CD8-positive, alpha-beta T cell (primary cell): ENCODE measurements at regions of chr12 and their contacts with region 1.

Region 1: DNA sequence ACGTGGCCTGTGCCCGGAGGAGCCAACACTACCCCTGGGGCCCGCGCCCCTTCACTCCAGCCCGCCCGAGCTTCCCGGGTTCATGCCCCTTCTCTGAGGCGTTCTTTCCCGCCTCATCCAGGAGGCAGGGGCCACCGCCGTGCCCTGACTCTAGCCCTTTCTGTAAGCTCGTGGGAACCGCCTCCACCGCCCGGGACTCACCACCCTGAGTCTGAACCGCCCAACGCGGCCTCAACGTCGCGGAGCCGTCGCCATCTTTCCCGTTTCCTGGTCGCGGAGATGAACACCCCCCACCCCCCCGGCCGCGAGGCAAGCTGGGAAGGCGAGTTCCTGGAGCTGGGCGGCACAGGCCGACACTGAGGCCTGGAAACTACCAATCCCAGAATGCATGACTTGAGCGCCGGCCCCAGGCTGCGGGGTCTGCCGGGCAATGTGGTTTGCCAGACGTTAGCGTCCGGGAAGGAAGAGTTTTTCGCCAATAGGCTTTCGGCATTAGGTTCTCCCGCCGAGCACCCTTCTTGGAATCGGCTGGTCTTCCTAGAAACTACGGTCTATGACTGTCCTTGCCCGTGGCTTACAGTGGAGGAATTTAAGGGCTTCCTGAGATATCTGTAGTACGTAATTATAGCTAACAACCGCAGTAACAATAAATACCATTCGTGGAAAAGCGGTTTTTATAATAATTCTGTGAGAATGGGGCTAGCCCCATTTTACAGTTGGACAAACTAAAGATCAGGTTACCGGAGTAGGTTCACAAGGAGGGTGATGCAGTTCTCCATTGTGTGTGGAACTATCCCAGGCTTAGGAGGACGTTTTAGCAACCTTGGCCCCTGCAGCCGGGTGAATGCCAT is at the start of gene DDX23:
- DNase-seq: peak; percentile 79 to 97 (median 90)
- ATAC-seq: peak; percentile 90
- H3K4me3 ChIP-seq: peak within 1 kb of the TSS; percentile 67 to 91
- H3K4me3 Mint-ChIP-seq: peak within 1 kb of the TSS; percentile 99
- H3K27ac ChIP-seq: peak within 1 kb of the TSS; percentile 92 to 96
- H3K27ac Mint-ChIP-seq: peak within 1 kb of the TSS; percentile 99
- H3K4me1 ChIP-seq: peaks cover 28% of the 10 kb centered on the region
- H3K4me1 Mint-ChIP-seq: peaks cover 42% of the 10 kb centered on the region
- H3K27me3 ChIP-seq: no peaks in the 10 kb centered on the region
- H3K27me3 Mint-ChIP-seq: no peaks in the 10 kb centered on the region
- CTCF ChIP-seq: no peak
- total RNA-seq, gene DDX23: 70.6 to 76.4 TPM

Region 2: DNA sequence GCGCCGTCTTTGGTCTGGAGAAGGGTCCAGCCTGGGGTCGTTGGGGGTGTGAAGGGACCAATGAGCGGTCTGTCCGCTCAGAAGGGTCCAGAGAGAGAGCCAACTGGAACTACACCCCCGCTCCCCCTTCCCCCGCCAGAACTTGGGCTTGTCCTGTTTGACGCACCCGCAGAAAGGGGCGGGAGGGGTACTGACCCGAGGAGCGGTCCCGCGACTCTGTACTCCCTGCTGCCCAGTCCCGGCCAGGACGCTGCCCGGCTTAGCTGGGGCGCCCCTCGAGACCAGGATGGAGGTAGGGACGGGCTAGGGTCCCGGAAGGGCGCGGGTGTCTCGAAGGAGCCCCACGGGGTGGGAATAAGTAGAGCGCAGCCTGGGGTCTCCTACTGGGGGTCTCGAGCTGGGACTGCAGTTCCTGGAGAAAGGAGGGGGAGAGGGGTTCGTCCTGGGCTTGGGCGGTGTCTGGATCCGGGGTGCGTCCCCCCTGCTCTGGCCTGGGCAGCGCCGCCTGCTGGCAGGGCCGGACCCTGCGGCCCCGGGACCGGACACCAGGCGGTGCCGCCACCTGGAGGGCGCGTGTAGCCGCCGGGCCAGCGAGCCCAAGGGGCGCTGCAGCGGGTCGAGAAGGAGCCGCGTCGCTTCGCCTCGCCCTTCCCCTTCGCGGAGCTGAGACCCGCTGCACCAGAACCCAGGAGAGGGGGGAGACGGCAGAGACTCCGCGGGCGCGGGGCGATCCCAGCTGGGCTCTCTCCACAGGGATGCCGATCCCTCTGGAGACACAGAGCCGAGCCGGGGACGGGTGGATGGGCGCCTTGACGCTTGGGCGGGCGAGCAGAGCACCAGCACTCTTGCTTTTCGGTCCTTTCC is 37.6 kb before region 1 on chr12:
- CTCF ChIA-PET with region 1: interaction called, 8 read pairs
- POLR2A ChIA-PET with region 1: interaction called, 4 read pairs
- intact Hi-C with region 1: loop called in 1 of 2 experiments (anchors 2 kb)
- DNase-seq: peak; percentile 39 to 86 (median 70)
- ATAC-seq: peak; percentile 56
- H3K4me3 ChIP-seq: peak overlapping the region; percentile 73 to 88
- H3K4me3 Mint-ChIP-seq: peak overlapping the region; percentile 88
- H3K27ac ChIP-seq: peak overlapping the region in 1 of 2 experiments; percentile 40
- H3K27ac Mint-ChIP-seq: no peak overlapping the region
- H3K4me1 ChIP-seq: peaks cover 27% of the 10 kb centered on the region
- H3K4me1 Mint-ChIP-seq: peaks cover 36% of the 10 kb centered on the region
- H3K27me3 ChIP-seq: no peaks in the 10 kb centered on the region
- H3K27me3 Mint-ChIP-seq: peaks cover 8% of the 10 kb centered on the region
- CTCF ChIP-seq: peak; percentile 83

Region 3: DNA sequence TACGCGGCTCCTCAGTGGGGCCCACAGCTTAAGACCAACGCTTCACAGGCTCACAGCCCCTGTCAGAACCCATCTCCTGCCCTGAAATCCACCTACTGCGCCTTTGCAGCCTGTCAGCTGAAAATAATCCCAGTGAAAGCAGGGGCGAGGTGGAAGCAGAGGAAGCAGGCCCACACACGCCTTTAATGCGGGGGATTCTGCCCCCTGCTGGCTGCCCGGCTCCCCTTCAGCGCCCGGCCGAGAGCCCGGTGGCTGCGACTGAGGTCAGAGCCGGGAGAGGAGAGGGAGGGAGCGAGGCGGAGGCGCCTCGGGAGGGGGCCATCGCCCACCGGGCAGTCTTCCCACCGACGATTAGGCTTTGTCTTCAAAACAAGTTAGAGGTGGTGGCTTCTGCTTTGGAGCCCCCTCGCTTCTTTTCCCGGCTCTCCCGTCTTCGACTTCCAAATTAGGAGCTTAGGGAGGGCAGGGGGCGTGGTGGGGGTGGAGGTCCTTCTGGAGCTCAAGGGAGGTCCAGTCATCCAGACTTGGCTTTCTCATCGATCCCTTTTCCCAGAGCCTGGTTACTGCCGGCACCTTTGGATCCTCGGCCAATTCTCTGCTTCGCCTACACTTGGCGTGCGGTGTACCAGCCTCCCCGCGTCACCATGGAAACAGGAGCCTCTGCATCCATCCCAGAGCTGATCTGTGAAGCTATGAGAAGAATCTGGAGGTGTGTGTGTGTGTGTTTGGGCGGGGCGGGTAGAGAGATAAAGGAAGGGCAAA is 38.7 kb after region 1 on chr12:
- CTCF ChIA-PET with region 1: interaction called, 270 read pairs
- POLR2A ChIA-PET with region 1: interaction called, 41 read pairs
- intact Hi-C with region 1: loop called in 1 of 2 experiments (anchors 1 kb)
- DNase-seq: peak; percentile 55 to 85 (median 73)
- ATAC-seq: peak; percentile 99
- H3K4me3 ChIP-seq: peak overlapping the region in 1 of 2 experiments; percentile 35
- H3K4me3 Mint-ChIP-seq: no peak overlapping the region
- H3K27ac ChIP-seq: no peak overlapping the region
- H3K27ac Mint-ChIP-seq: no peak overlapping the region
- H3K4me1 ChIP-seq: peaks cover 7% of the 10 kb centered on the region
- H3K4me1 Mint-ChIP-seq: peaks cover 3% of the 10 kb centered on the region
- H3K27me3 ChIP-seq: peaks cover 5 to 13% of the 10 kb centered on the region in 2 experiments
- H3K27me3 Mint-ChIP-seq: peaks cover 19% of the 10 kb centered on the region
- CTCF ChIP-seq: peak; percentile 83

Region 4: GRCh38 chr12:48936379-48936979 is 84.4 kb after region 1 on chr12:
- CTCF ChIA-PET with region 1: interaction called, 115 read pairs
- POLR2A ChIA-PET with region 1: interaction called, 9 read pairs
- intact Hi-C with region 1: loop called (anchors 1 kb)
- DNase-seq: peak; percentile 72 to 94 (median 86)
- ATAC-seq: peak; percentile 67
- H3K4me3 ChIP-seq: no peak overlapping the region
- H3K4me3 Mint-ChIP-seq: no peak overlapping the region
- H3K27ac ChIP-seq: peak overlapping the region in 1 of 2 experiments; percentile 17
- H3K27ac Mint-ChIP-seq: peak overlapping the region; percentile 79
- H3K4me1 ChIP-seq: peaks cover 20% of the 10 kb centered on the region
- H3K4me1 Mint-ChIP-seq: peaks cover 30% of the 10 kb centered on the region
- H3K27me3 ChIP-seq: no peaks in the 10 kb centered on the region
- H3K27me3 Mint-ChIP-seq: no peaks in the 10 kb centered on the region
- CTCF ChIP-seq: peak; percentile 88

Region 5: DNA sequence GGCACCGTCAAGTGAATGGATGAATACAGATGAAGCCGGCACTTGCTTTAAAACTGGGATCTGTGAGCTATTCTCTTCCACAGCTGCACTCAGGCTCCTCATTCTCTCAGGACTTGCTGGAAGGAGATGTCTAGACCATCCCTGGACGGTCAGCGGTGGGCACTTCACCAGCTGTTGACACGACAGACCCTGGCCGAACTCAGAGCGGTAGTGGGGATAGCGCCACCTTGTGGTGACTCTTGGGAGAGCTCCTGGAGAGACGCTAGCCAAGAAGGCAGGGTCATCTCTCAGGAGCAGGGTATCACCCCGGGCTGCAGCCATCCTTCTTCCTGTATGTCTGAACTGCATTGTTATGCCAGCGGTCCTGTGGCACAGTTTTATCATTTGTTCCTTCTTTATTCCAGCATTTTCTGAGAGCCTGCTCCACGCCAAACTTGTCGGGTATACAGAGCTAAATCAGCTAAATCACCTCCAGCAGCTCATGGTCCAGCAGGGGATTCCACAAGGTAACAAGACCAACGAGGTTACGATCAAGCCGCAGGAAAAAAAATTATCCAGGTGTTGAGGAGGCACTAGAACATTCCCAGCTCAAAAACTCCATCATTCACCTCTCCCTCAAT is 136.0 kb after region 1 on chr12:
- CTCF ChIA-PET with region 1: interaction called, 23 read pairs
- POLR2A ChIA-PET with region 1: interaction called, 3 read pairs
- intact Hi-C with region 1: no loop called
- DNase-seq: peak in 8 of 9 experiments; percentile 58 to 84 (median 78)
- ATAC-seq: peak; percentile 84
- H3K4me3 ChIP-seq: no peak overlapping the region
- H3K4me3 Mint-ChIP-seq: no peak overlapping the region
- H3K27ac ChIP-seq: no peak overlapping the region
- H3K27ac Mint-ChIP-seq: no peak overlapping the region
- H3K4me1 ChIP-seq: no peaks in the 10 kb centered on the region
- H3K4me1 Mint-ChIP-seq: peaks cover 5% of the 10 kb centered on the region
- H3K27me3 ChIP-seq: peaks cover 0 to 7% of the 10 kb centered on the region in 2 experiments
- H3K27me3 Mint-ChIP-seq: peaks cover 24% of the 10 kb centered on the region
- CTCF ChIP-seq: peak; percentile 81

Region 6: DNA sequence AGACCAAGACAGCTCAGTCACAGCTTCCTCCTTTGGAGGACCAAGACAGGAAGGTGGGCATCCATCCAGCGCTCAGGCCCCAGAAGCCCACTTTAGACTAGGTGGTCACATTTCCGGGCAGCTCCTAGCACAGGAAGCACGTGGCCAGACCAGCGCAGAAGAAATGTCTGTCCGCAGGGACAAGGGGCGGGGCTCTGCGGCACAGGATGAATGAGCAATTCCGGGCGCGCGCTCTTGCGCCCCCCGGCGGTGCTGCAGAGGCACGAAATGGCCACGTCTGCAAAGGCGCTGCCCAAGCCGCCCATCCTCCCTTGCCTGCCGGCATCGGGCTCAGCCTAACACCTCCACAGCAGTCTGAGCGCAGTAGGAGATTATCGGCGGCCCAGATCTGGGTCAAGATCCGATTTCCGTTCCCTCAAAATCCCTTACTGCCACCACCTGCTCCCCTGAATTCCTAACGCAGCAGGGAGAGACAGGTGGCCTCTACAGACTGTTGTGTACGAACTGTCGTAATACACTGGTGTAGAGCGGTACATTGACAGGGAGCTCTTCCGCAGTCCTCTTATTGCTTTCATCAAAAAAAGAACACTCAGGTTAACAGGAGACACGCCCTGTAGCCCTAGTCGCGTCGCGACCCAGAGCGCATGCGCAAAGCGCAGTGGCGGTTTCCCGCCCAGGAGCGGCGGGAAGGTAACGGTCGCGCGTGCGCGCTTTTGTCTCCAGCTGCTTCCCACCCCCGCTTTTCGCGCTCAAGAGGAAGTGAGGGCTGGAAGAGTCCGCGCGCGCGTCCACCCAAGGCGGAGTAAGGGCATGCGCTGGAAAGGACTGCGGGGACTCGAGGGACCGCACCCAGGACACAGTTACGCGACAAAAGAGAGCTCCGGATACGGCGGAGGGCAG is 278.3 kb after region 1 on chr12:
- CTCF ChIA-PET with region 1: interaction called, 4 read pairs
- POLR2A ChIA-PET with region 1: interaction called, 4 read pairs
- intact Hi-C with region 1: loop called in 1 of 2 experiments (anchors 5 kb)
- DNase-seq: peak; percentile 78 to 97 (median 92)
- ATAC-seq: peak; percentile 67
- H3K4me3 ChIP-seq: peak overlapping the region; percentile 88 to 91
- H3K4me3 Mint-ChIP-seq: peak overlapping the region; percentile 96
- H3K27ac ChIP-seq: peak overlapping the region; percentile 90 to 96
- H3K27ac Mint-ChIP-seq: peak overlapping the region; percentile 99
- H3K4me1 ChIP-seq: peaks cover 25% of the 10 kb centered on the region
- H3K4me1 Mint-ChIP-seq: peaks cover 47% of the 10 kb centered on the region
- H3K27me3 ChIP-seq: no peaks in the 10 kb centered on the region
- H3K27me3 Mint-ChIP-seq: no peaks in the 10 kb centered on the region
- CTCF ChIP-seq: peak; percentile 96

Region 7: GRCh38 chr12:49170924-49171323 is 318.8 kb after region 1 on chr12:
- CTCF ChIA-PET with region 1: no interaction called
- POLR2A ChIA-PET with region 1: no interaction called
- intact Hi-C with region 1: no loop called
- DNase-seq: no peak
- ATAC-seq: no peak
- H3K4me3 ChIP-seq: no peak overlapping the region
- H3K4me3 Mint-ChIP-seq: no peak overlapping the region
- H3K27ac ChIP-seq: no peak overlapping the region
- H3K27ac Mint-ChIP-seq: no peak overlapping the region
- H3K4me1 ChIP-seq: no peaks in the 10 kb centered on the region
- H3K4me1 Mint-ChIP-seq: no peaks in the 10 kb centered on the region
- H3K27me3 ChIP-seq: no peaks in the 10 kb centered on the region
- H3K27me3 Mint-ChIP-seq: no peaks in the 10 kb centered on the region
- CTCF ChIP-seq: no peak